A673 (cell line): ENCODE measurements at regions of chr19 and their contacts with region 1.

Region 1: GRCh38 chr19:55809381-55810058 is 22.3 kb downstream of the NLRP11 start:
- DNase-seq: peak; percentile 92
- H3K4me3 ChIP-seq: no peak overlapping the region
- H3K27ac ChIP-seq: no peak overlapping the region
- H3K4me1 ChIP-seq: no peaks in the 10 kb centered on the region
- H3K27me3 ChIP-seq: peaks cover 5% of the 10 kb centered on the region
- CTCF ChIP-seq: peak; percentile 75

Region 2: DNA sequence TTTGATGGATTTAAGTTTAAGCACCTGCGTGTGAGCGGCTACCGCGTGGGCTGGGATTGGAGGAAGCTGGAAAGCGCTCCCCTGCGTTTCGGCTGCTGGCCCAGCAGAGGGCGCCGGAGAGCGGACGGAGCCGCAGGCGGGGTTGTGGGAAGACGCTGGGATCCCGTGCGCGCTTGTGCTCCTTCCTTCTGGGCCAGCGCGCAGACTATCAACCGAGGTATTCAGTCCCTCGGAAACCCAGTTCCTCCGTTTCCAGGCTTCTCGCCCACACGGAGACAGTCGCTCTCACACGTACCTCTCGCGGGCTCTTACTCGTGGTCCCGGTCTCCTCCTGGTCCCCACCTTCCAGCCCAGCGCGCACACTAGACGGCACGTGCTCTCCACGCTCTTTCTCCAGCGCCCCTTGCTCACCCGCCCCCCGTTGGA is 105.7 kb before region 1 on chr19:
- CTCF ChIA-PET with region 1: interaction called, 5 read pairs
- POLR2A ChIA-PET with region 1: no interaction called
- intact Hi-C with region 1: loop called (anchors 2 kb)
- DNase-seq: peak; percentile 66
- H3K4me3 ChIP-seq: no peak overlapping the region
- H3K27ac ChIP-seq: no peak overlapping the region
- H3K4me1 ChIP-seq: no peaks in the 10 kb centered on the region
- H3K27me3 ChIP-seq: no peaks in the 10 kb centered on the region
- CTCF ChIP-seq: peak; percentile 88